Ovary (tissue), 10 donors: ENCODE measurements at regions of chr9 and their contacts with region 1.

Region 1: DNA sequence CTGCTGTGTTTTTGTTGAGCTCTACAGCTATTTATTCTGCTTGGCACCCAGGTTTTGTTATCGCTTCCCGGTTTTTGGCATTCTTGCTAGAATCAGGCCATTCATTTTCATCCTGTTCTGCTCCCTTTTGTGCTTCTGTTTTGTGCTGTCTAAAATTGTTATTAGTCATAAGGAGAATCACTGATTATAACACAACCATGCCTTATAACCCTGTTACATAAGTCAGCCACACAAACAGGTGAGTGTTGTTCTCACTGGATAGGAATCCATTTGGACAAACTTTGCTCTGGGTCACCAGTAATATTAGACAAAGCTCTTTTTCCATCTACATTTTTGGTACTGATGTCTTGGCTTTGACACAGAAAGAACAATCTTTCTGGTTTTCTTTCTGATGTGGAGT is 622.8 kb downstream of the PSAT1 start:
- DNase-seq: no peak
- H3K4me3 ChIP-seq: no peak overlapping the region
- H3K27ac ChIP-seq: no peak overlapping the region
- H3K4me1 ChIP-seq: no peaks in the 10 kb centered on the region
- H3K27me3 ChIP-seq: no peaks in the 10 kb centered on the region
- CTCF ChIP-seq: no peak
- EP300 ChIP-seq: no peak
- POLR2A ChIP-seq: no peak

Region 2: GRCh38 chr9:79371948-79372555 is 452.4 kb after region 1 on chr9:
- intact Hi-C with region 1: loop called in 1 of 4 experiments (anchors 5 kb)
- DNase-seq: no peak
- H3K4me3 ChIP-seq: no peak overlapping the region
- H3K27ac ChIP-seq: no peak overlapping the region
- H3K4me1 ChIP-seq: no peaks in the 10 kb centered on the region
- H3K27me3 ChIP-seq: no peaks in the 10 kb centered on the region
- CTCF ChIP-seq: no peak
- EP300 ChIP-seq: no peak
- POLR2A ChIP-seq: no peak